Activated T-helper 1 cell treated with anti-CD3 and anti-CD28 coated beads, Interleukin-12 subunit alpha, Interleukin-12 subunit beta, Interleukin-2, Interleukin-4 antibody, amounts not matched to agents 30 ng/mL and 10 ng/mL and 1 ng/mL, durations not matched to agents 14 hours and 24 hours and 36 hours (primary cell): ENCODE measurements at regions of chr1 and their contacts with region 1.

Region 1: GRCh38 chr1:219990782-219991510 is 55.4 kb downstream of the EPRS1 start:
- DNase-seq: no peak
- H3K4me3 Mint-ChIP-seq: no peak overlapping the region
- H3K27ac Mint-ChIP-seq: no peak overlapping the region
- H3K4me1 Mint-ChIP-seq: peaks cover 5% of the 10 kb centered on the region
- H3K27me3 Mint-ChIP-seq: no peaks in the 10 kb centered on the region

Region 2: DNA sequence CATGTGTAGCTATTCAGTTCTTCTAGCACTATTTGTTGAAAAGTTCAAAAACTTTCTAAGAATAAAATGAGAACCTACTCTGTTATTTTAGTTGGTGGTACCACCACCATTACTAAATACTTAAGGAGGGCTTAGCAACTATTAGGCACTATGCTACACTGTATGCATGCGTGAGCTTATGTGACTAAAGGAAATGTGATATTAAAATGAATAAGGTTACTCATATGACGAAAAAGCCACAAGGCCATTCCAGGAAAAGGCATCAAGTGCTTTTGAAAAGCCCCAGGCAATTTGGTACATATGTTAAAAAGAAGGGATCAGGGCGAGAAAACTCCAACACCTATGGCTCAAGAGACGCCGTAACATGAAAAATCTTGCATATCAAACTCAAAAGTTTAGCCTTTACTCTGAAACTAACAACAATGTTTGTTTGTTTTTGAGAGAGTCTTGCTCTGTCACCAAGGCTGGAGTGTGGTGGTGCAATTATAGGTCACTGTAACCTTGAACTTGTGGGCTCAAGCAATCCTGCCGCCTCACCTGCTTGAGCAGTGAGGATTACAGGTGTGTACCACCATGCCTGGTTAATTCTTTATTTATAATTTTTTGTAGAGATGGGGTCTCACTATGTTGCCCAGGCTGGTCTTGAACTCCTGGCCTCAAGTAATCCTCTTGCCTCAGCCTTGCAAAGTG is 12.8 kb after region 1 on chr1:
- intact Hi-C with region 1: loop called (anchors 2 kb)
- DNase-seq: no peak
- H3K4me3 Mint-ChIP-seq: peak overlapping the region; percentile 24
- H3K27ac Mint-ChIP-seq: peak overlapping the region; percentile 73
- H3K4me1 Mint-ChIP-seq: peaks cover 23% of the 10 kb centered on the region
- H3K27me3 Mint-ChIP-seq: no peaks in the 10 kb centered on the region

Region 3: DNA sequence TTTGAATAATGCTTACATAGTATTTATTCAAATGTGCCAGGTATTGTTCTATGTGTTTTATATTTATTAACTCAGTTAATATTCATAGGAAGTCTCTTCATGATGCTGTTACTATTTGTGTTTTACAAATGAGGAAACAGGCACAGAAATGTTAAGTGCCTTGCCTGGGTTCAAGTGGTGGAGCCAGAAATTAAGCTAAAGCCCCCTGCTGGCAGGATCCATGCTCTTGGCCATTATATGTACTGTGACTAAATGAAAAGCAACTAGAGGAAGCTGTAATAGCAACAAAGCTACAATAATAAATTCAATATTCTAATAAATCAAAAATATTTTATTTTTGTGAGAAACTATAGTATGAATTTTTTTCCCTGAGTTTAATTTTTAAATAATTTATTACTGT is 132.9 kb after region 1 on chr1:
- intact Hi-C with region 1: loop called (anchors 5 kb)
- DNase-seq: no peak
- H3K4me3 Mint-ChIP-seq: no peak overlapping the region
- H3K27ac Mint-ChIP-seq: no peak overlapping the region
- H3K4me1 Mint-ChIP-seq: peaks cover 17% of the 10 kb centered on the region
- H3K27me3 Mint-ChIP-seq: no peaks in the 10 kb centered on the region